H1 (cell line): ENCODE measurements at regions of chr1 and their contacts with region 1.

Region 1: GRCh38 chr1:26472901-26473845 is 933 bp downstream of the HMGN2 start:
- DNase-seq: peak; percentile 74 to 95
- H3K4me3 ChIP-seq: peak overlapping the region; percentile 71 to 96 (median 82)
- H3K27ac ChIP-seq: peak overlapping the region; percentile 99; the same call in 1 of the 2 replicates
- H3K4me1 ChIP-seq: peaks cover 8 to 13% (median 11%) of the 10 kb centered on the region in 4 experiments
- H3K27me3 ChIP-seq: peaks cover 0 to 4% (median 0%) of the 10 kb centered on the region in 4 experiments; a peak in 2 of 7 replicates
- CTCF ChIP-seq: no peak
- EP300 ChIP-seq: no peak
- POLR2A ChIP-seq: peak in 1 of 2 experiments; percentile 8; a peak in 1 of 3 replicates
- RAD21 ChIP-seq: no peak

Region 2: GRCh38 chr1:26344147-26344920 is 128.8 kb before region 1 on chr1:
- CTCF ChIA-PET with region 1: no interaction called
- POLR2A ChIA-PET with region 1: no interaction called
- DNase-seq: no peak
- H3K4me3 ChIP-seq: no peak overlapping the region
- H3K27ac ChIP-seq: no peak overlapping the region
- H3K4me1 ChIP-seq: no peaks in the 10 kb centered on the region; a peak in 2 of 7 replicates
- H3K27me3 ChIP-seq: no peaks in the 10 kb centered on the region
- CTCF ChIP-seq: no peak
- EP300 ChIP-seq: no peak
- POLR2A ChIP-seq: no peak
- RAD21 ChIP-seq: no peak

Region 3: DNA sequence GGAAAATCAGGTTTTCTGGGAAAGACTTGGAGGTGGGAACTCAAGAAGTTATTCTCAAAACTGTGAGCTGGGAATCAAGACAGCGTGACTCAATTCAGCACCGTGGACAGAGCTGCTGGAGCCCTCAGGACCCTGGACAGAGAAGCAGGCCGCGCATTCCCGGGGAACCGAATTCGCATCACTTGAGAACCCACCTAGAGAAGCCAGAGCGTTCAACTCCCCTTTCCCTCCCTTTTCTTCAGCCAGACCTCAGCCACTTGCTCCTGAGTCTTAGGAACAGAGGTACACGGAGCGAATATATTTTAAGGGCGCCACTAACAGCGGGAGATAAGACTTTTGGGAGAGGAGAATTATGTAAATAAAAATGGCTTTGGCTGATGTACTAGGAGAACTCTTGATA is 64.6 kb before region 1 on chr1:
- CTCF ChIA-PET with region 1: no interaction called
- POLR2A ChIA-PET with region 1: interaction called, 73 read pairs
- DNase-seq: peak in 1 of 2 experiments; percentile 97
- H3K4me3 ChIP-seq: peak overlapping the region; percentile 41 to 78 (median 60); a peak in 6 of 8 replicates
- H3K27ac ChIP-seq: no peak overlapping the region
- H3K4me1 ChIP-seq: peaks cover 0 to 20% (median 6%) of the 10 kb centered on the region in 4 experiments; a peak in 6 of 7 replicates
- H3K27me3 ChIP-seq: no peaks in the 10 kb centered on the region
- CTCF ChIP-seq: no peak
- EP300 ChIP-seq: peak in 1 of 2 experiments; percentile 13; a peak in 1 of 3 replicates
- POLR2A ChIP-seq: no peak
- RAD21 ChIP-seq: peak in 1 of 2 experiments; percentile 16; a peak in 1 of 4 replicates

Region 4: DNA sequence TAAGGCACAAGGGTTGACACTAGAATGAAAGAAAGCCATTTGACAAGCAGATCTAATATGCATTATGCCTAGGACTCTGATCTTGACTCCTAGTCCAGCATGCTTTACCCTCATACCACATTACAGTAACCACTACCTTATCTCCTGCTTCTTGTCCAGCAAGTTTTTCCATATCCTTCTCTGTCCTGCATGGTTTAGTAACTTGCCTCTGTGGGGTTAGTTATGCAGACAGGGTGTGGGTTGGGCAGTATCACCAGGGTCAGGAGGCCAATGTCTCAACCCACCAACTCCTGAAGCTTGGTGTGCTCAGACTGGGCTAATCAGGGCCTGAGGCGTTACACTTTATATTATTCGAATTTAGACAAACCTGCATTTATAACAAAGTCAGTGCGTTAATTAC is 22.3 kb before region 1 on chr1:
- CTCF ChIA-PET with region 1: interaction called, 7 read pairs
- POLR2A ChIA-PET with region 1: interaction called, 11 read pairs
- DNase-seq: no peak
- H3K4me3 ChIP-seq: no peak overlapping the region
- H3K27ac ChIP-seq: no peak overlapping the region
- H3K4me1 ChIP-seq: no peaks in the 10 kb centered on the region
- H3K27me3 ChIP-seq: no peaks in the 10 kb centered on the region
- CTCF ChIP-seq: no peak
- EP300 ChIP-seq: no peak
- POLR2A ChIP-seq: no peak
- RAD21 ChIP-seq: no peak

Region 5: DNA sequence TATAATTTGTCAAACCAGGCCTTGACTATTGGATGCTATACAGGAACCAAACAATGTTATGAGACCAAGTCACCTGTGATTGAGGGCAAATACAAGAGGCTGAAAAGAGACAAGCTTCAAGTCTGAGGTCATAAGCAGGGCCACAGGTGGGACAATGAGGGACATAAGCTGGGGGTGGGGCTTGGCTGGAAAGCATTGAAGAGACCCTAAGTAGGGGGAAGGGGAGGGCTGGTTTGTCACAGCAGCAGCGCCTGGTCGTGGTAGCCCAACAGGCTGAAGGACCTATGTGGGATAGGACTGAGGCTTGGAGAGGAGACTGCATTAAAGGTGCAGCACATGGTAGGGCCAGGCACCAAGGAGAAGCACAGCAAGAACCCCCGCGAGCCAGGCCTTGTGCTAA is 17.0 kb after region 1 on chr1:
- CTCF ChIA-PET with region 1: interaction called, 3 read pairs
- POLR2A ChIA-PET with region 1: interaction called, 49 read pairs
- DNase-seq: no peak
- H3K4me3 ChIP-seq: no peak overlapping the region
- H3K27ac ChIP-seq: no peak overlapping the region
- H3K4me1 ChIP-seq: no peaks in the 10 kb centered on the region; a peak in 1 of 7 replicates
- H3K27me3 ChIP-seq: no peaks in the 10 kb centered on the region
- CTCF ChIP-seq: no peak
- EP300 ChIP-seq: no peak
- POLR2A ChIP-seq: no peak
- RAD21 ChIP-seq: no peak

Region 6: DNA sequence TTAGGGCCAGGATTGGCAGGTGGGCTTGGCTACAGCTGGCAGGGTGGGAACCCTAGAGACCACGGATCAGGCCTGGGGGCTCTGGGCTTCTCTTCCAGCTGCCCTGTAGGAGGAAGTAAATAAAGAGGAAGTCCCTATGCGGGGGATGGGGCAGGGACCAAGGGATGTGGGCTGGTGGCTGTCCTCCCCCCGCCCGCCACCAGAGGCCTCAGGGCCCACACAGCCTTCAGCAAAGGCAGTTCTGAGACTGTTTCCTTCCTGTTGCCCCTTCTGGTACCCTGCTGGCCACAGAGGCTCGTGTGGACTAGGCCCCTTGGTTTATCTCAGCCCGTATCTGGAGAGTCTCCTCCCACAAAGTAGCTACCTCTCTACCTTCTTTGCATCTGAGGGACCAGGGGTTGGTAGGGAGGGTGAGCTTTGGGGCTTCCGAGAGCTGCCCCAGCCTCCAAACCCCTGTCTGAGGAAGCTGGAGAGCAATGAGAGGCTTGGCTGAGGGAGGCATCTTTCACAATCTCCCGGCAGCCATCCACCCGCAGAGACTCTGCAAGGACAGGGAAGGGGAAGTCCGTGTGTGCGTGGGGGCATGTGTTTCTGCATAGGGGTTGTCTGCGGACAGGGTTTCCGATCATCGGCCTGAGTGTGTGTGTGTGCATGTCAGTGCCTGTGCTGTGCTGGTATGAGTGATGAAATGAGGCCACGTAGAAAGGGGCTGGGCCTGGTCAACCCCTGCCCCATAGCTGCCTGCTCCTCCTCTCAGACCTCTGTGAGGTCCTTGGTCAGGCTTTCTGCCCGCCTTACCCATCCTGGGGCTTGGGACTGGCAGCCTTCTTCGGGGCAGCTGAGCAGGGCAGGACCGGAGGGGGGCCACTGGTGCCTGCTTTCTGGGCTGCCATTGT is 68.9 kb after region 1 on chr1:
- CTCF ChIA-PET with region 1: interaction called, 3 read pairs
- POLR2A ChIA-PET with region 1: interaction called, 10 read pairs
- DNase-seq: peak in 1 of 2 experiments; percentile 78
- H3K4me3 ChIP-seq: no peak overlapping the region; a peak in 1 of 8 replicates
- H3K27ac ChIP-seq: peak overlapping the region; percentile 45; the same call in 1 of the 2 replicates
- H3K4me1 ChIP-seq: peaks cover 0 to 17% (median 7%) of the 10 kb centered on the region in 4 experiments; a peak in 6 of 7 replicates
- H3K27me3 ChIP-seq: no peaks in the 10 kb centered on the region
- CTCF ChIP-seq: peak; percentile 59 to 74 (median 66)
- EP300 ChIP-seq: no peak
- POLR2A ChIP-seq: no peak
- RAD21 ChIP-seq: peak; percentile 34 to 41; a peak in 3 of 4 replicates